Heart right ventricle (tissue), 16 donors: ENCODE measurements at regions of chr10 and their contacts with region 1.

Region 1: DNA sequence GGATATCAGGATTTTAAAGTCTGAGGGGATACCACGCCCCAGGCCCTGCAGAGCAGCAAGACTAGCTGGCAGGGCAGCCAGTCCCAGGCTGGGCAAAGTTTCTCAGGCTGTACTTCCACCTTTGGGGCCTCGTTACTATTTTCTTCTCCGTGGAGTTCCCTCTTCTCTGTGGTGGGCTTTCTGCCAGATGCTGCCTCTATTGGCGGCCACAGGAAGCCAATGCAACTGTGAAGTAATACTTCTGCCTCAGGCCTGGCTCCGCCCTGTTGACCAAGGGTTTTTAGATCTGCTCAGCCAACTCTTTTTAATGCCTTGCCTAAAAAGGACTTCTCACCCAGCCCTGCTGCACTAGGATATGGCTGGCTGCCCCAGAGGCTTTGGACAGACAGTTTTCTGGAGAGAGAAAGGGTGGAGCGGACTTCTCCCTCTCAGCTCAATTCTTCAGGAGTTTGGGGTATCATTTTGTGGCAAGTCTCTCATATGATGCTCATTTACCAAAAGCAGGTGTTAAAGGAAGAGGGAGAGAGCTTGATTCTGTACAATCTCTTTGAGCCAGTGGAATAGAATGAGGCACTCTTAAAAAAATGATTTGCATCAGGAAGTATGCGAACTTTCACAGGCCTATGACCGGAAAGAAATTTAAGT is 67.4 kb downstream of the HHEX start:
- DNase-seq: peak; percentile 74 to 86
- ATAC-seq: peak; percentile 88 to 97 (median 95)
- H3K4me3 ChIP-seq: peak overlapping the region in 3 of 10 donors; percentile 5 to 8 (median 8)
- H3K27ac ChIP-seq: peak overlapping the region in 9 of 10 donors; percentile 50 to 79 (median 69)
- H3K4me1 ChIP-seq: peaks cover 3 to 74% (median 23%) of the 10 kb centered on the region in 9 donors
- H3K27me3 ChIP-seq: no peaks in the 10 kb centered on the region
- CTCF ChIP-seq: peak in 7 of 9 donors; percentile 14 to 39 (median 31)

Region 2: DNA sequence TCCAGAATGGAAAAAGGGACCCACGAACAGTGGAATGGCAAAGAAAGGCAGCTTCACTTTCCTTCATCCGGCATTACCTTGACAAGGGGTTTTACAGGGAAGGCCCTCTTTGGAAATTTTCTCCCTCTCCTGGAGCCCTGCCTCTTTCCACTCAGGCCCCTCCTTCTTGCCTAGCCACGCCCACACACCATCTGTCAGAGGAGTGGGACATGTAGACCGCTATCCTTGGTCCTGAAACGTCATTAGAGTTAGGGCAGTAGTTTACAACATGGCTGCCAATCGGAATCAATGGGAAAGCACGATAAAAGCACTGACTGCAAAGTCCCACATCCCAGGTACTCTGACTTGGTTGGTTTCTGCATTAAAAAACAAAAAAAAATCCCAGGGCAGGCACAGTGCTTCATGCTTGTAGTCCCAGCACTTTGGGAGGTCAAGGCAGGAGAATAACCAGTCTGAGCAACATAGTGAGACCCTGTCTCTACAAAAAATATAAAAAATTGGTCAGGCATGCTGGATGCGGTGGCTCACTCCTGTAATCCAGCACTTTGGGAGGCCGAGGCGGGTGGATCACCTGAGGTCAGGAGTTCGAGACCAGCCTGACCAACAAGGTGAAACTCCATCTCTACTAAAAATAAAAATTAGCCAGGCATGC is 369.8 kb before region 1 on chr10:
- intact Hi-C with region 1: no loop called
- DNase-seq: peak in 1 of 2 donors; percentile 50
- ATAC-seq: peak in 5 of 8 donors; percentile 47 to 77 (median 63)
- H3K4me3 ChIP-seq: no peak overlapping the region
- H3K27ac ChIP-seq: no peak overlapping the region
- H3K4me1 ChIP-seq: peaks cover 0 to 6% (median 0%) of the 10 kb centered on the region in 9 donors
- H3K27me3 ChIP-seq: no peaks in the 10 kb centered on the region
- CTCF ChIP-seq: no peak

Region 3: GRCh38 chr10:92699518-92700381 is 57.4 kb before region 1 on chr10:
- intact Hi-C with region 1: loop called in 3 of 10 experiments (anchors 5 kb)
- DNase-seq: peak; percentile 31 to 45
- ATAC-seq: peak; percentile 34 to 89 (median 66)
- H3K4me3 ChIP-seq: peak overlapping the region; percentile 18 to 57 (median 44)
- H3K27ac ChIP-seq: peak overlapping the region in 4 of 10 donors; percentile 23 to 56 (median 34)
- H3K4me1 ChIP-seq: peaks cover 0 to 33% (median 12%) of the 10 kb centered on the region in 9 donors
- H3K27me3 ChIP-seq: peaks cover 0 to 82% (median 57%) of the 10 kb centered on the region in 7 donors
- CTCF ChIP-seq: no peak

Region 4: GRCh38 chr10:92810934-92811532 is 53.8 kb after region 1 on chr10:
- intact Hi-C with region 1: loop called in 2 of 10 experiments (anchors 5 kb)
- DNase-seq: no peak
- ATAC-seq: no peak
- H3K4me3 ChIP-seq: no peak overlapping the region
- H3K27ac ChIP-seq: no peak overlapping the region
- H3K4me1 ChIP-seq: peaks cover 0 to 10% (median 0%) of the 10 kb centered on the region in 9 donors
- H3K27me3 ChIP-seq: peaks cover 0 to 11% (median 0%) of the 10 kb centered on the region in 7 donors
- CTCF ChIP-seq: no peak

Region 5: GRCh38 chr10:92822060-92822634 is 65.0 kb after region 1 on chr10:
- intact Hi-C with region 1: loop called in 1 of 10 experiments (anchors 10 kb)
- DNase-seq: no peak
- ATAC-seq: peak in 7 of 8 donors; percentile 58 to 91 (median 78)
- H3K4me3 ChIP-seq: no peak overlapping the region
- H3K27ac ChIP-seq: peak overlapping the region in 6 of 10 donors; percentile 12 to 74 (median 61)
- H3K4me1 ChIP-seq: peaks cover 0 to 27% (median 10%) of the 10 kb centered on the region in 9 donors
- H3K27me3 ChIP-seq: no peaks in the 10 kb centered on the region
- CTCF ChIP-seq: no peak